ENCODE measurements at regions of chr9 and their contacts with region 1.

Region 1: DNA sequence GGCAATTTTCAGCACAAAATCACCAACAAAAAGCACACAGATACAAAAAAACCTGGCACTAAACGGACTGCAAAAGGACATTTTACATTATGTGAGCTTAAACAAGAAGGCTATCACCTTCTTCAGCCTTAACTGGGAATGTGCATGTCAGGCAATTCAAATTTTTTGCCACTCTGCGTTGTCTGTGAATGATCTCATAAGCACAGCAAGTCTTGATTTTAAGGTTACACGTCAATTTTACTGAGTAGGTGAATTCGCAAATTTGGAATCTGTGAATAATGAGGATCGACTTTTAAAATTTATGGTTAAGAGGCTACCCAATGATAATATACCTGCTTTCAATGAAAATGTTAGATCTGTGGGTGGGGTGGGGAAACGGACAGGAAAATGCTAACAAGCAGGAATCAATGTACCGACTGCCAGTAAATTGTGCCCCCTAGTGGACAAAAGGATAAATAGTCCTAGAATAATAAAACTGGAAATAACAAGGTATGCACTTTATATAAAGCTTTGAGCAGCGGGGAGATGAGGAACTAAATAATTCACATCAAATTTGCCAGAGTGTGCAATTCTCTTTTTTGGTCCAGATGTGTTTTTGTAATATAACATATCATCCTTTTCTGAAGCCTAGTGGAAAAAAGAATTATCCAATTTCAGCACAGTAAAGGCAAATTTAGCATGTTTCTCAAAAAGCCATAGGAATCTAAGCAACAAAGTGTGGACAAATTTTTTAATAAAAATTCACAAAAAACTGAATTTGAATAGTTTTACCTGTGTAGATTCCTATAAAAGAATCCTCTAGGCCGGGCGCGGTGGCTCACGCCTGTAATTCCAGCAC is 20.5 kb downstream of the EQTN start:
- DNase-seq: peak; percentile 35
- H3K4me3 ChIP-seq: no peak overlapping the region
- H3K27ac ChIP-seq: no peak overlapping the region
- H3K4me1 ChIP-seq: no peaks in the 10 kb centered on the region
- H3K27me3 ChIP-seq: no peaks in the 10 kb centered on the region
- CTCF ChIP-seq: peak; percentile 65 to 72

Region 2: DNA sequence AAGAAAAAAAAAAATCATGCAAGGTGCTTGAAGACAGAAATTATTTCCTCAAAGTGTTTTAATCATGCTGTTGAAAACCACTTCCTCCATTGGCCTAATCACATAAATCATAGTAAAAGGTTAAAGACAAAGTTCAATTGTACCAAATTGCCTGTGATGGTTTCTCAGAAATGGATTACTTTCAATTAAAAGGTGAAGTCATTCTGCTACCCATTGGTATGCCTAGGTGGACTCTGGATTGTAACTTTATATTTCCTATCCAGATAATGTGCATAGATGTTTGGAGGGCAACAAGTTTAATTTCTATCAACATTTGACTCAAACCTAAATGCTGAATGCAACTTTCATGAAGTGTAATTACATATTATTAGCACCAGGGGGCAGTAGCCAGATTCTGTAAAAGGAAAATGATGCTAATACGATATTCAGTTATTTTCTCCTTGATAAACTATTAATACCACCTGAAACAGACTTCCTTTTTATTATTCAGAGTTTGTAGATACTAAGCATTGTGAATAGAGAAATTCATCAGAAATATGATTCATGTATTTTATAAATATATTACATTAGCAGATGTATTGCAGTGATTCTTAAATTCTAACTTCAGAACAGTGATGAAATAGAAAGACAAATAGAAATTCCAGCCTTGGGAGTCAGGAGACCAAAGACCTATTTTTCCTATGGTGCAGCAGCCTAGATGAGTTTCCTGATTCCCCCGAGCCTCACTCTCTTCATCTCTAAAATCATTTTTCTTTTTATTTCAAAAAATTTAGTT is 532.0 kb before region 1 on chr9:
- CTCF ChIA-PET with region 1: no interaction called
- dilution Hi-C with region 1: no loop called
- in situ Hi-C with region 1: loop called in 1 of 2 experiments (anchors 25 kb)
- intact Hi-C with region 1: loop called (anchors 10 kb)
- DNase-seq: peak; percentile 9
- H3K4me3 ChIP-seq: no peak overlapping the region
- H3K27ac ChIP-seq: no peak overlapping the region
- H3K4me1 ChIP-seq: peaks cover 3% of the 10 kb centered on the region
- H3K27me3 ChIP-seq: no peaks in the 10 kb centered on the region
- CTCF ChIP-seq: peak; percentile 61 to 66

Region 3: GRCh38 chr9:27033823-27034403 is 242.5 kb before region 1 on chr9:
- CTCF ChIA-PET with region 1: no interaction called
- dilution Hi-C with region 1: no loop called
- in situ Hi-C with region 1: loop called (anchors 5 to 10 kb)
- intact Hi-C with region 1: loop called (anchors 1 kb)
- DNase-seq: peak; percentile 41
- H3K4me3 ChIP-seq: no peak overlapping the region
- H3K27ac ChIP-seq: no peak overlapping the region
- H3K4me1 ChIP-seq: peaks cover 8% of the 10 kb centered on the region
- H3K27me3 ChIP-seq: no peaks in the 10 kb centered on the region
- CTCF ChIP-seq: peak; percentile 81 to 88

Region 4: GRCh38 chr9:27247756-27248155 is 28.7 kb before region 1 on chr9:
- CTCF ChIA-PET with region 1: no interaction called
- dilution Hi-C with region 1: no loop called
- in situ Hi-C with region 1: no loop called
- intact Hi-C with region 1: loop called (anchors 1 kb)
- DNase-seq: peak; percentile 56
- H3K4me3 ChIP-seq: no peak overlapping the region
- H3K27ac ChIP-seq: no peak overlapping the region
- H3K4me1 ChIP-seq: no peaks in the 10 kb centered on the region
- H3K27me3 ChIP-seq: no peaks in the 10 kb centered on the region
- CTCF ChIP-seq: peak; percentile 66 to 79

Measured in mammary epithelial cell (primary cell).